Activated CD8-positive, alpha-beta memory T cell treated with anti-CD3 and anti-CD28 coated beads, Interleukin-2, amount 10 ng/mL, durations not matched to agents 7 days and 5 days (primary cell): ENCODE measurements at regions of chr17 and their contacts with region 1.

Region 1: GRCh38 chr17:81018044-81018802 is 16.7 kb upstream of the BAIAP2 start:
- DNase-seq: peak; percentile 80
- ATAC-seq: peak; percentile 95
- H3K4me3 Mint-ChIP-seq: peak overlapping the region; percentile 65
- H3K27ac Mint-ChIP-seq: peak overlapping the region; percentile 90
- H3K4me1 Mint-ChIP-seq: peaks cover 33% of the 10 kb centered on the region
- H3K27me3 Mint-ChIP-seq: no peaks in the 10 kb centered on the region

Region 2: GRCh38 chr17:81034779-81035388 is 16.7 kb after region 1 on chr17 and contains the start of gene BAIAP2:
- CTCF ChIA-PET with region 1: interaction called, 21 read pairs
- DNase-seq: peak; percentile 96
- ATAC-seq: peak; percentile 83
- H3K4me3 Mint-ChIP-seq: peak within 1 kb of the TSS; percentile 74
- H3K27ac Mint-ChIP-seq: no peak within 1 kb of the TSS
- H3K4me1 Mint-ChIP-seq: peaks cover 6% of the 10 kb centered on the region
- H3K27me3 Mint-ChIP-seq: peaks cover 40% of the 10 kb centered on the region
- total RNA-seq, gene BAIAP2: 4.8 to 7.0 TPM

Region 3: DNA sequence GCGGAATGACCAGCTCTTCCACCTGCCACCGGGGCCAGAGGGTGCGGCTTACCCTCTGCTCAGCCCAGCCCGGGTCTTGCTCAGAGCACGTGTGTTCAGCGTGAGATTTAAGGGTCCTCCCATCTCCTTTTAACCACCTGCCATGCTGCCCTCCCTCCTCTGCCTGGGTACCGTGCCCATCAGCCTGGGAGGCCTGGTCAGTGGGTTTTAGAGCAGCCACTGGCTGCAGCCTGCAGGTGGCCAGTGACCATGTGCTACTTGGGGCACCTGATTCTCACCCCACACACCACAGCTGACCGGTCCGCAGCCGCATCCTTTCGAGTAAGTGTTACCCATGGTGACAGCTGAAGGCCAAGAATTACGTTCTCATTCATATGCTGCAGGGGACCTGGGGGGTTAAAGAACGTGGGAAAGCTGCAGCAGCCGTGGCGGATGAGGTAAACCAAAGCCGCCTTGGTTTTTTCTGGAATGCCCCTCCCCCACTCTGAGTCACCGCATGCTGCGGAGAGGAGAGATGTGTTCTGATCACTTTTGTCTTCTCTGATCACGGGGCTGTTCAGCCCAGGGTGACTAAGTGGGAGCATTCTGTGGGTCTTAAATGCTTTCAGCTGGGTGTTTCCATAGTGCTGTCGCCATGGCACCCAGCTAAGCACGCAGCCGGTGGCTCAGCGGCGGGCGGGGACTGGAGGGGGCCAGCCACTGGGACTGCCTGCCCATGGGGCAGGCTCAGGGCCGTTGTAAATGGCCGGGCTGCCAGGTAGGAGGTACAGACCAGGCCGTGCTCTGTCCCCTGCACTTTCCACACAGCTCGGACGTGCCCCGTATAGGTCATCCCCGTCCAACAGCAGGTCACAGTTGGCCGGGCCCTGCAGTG is 76.5 kb after region 1 on chr17:
- CTCF ChIA-PET with region 1: interaction called, 124 read pairs
- DNase-seq: peak; percentile 96
- ATAC-seq: peak; percentile 88
- H3K4me3 Mint-ChIP-seq: peak overlapping the region; percentile 44
- H3K27ac Mint-ChIP-seq: peak overlapping the region; percentile 82
- H3K4me1 Mint-ChIP-seq: peaks cover 42% of the 10 kb centered on the region
- H3K27me3 Mint-ChIP-seq: peaks cover 9% of the 10 kb centered on the region